Ascending aorta (tissue), 2 donors: ENCODE measurements at regions of chr17 and their contacts with region 1.

Region 1: DNA sequence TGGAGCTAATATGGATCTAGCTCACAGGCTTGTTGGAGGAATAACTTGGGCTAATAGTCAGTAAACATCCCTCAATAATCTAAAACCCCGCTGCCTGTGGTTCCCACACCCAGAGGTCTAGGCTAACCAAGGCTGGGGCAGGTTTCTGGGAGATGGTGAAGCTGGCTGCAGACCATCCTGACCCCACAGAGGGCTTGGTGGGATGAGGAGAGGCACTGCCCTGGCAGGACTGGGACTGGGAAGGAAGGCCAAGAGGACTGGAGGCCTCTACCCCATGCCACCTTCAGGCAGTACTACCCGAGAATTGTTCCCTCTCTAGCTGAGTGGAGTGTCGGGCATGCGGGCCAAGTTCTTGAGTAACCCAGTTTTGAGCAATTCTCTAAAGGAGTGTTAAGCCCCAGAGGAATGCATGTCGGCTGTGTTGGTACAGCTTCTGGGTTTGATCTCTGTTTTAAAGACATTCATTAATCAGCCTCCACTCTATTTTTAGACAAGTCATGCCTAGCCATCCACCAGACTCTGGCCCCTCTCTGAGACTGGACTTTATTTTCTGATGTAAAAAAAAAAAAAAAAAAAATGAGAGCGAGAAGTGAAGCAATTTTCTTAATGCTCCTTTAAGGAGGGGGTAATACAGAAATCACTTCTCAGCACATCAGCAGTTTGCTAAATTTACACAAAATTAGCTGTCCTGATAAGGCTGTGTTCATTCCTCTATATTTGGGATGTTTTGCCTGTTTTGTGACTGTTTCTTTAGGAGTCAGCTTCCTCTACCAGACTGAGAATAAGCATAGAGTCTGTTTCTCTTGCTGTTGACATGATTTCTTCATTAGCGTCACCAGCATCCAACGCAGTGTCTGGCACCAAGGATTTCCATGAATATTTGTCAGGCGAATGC is 88.8 kb downstream of the AXIN2 start:
- DNase-seq: peak; percentile 41 to 94
- H3K4me3 ChIP-seq: peak overlapping the region; percentile 7 to 41
- H3K27ac ChIP-seq: peak overlapping the region; percentile 86 to 95
- H3K4me1 ChIP-seq: peaks cover 0 to 19% of the 10 kb centered on the region in 2 donors
- H3K27me3 ChIP-seq: no peaks in the 10 kb centered on the region
- CTCF ChIP-seq: no peak

Region 2: GRCh38 chr17:65055348-65056261 is 417.1 kb before region 1 on chr17:
- intact Hi-C with region 1: loop called (anchors 5 kb)
- DNase-seq: peak; percentile 27 to 80
- H3K4me3 ChIP-seq: peak overlapping the region; percentile 87 to 92
- H3K27ac ChIP-seq: peak overlapping the region; percentile 97 to 98
- H3K4me1 ChIP-seq: peaks cover 0 to 30% of the 10 kb centered on the region in 2 donors
- H3K27me3 ChIP-seq: no peaks in the 10 kb centered on the region
- CTCF ChIP-seq: no peak

Region 3: GRCh38 chr17:65270499-65271253 is 202.0 kb before region 1 on chr17:
- intact Hi-C with region 1: loop called (anchors 5 kb)
- DNase-seq: no peak
- H3K4me3 ChIP-seq: no peak overlapping the region
- H3K27ac ChIP-seq: peak overlapping the region; percentile 85 to 91
- H3K4me1 ChIP-seq: peaks cover 0 to 19% of the 10 kb centered on the region in 2 donors
- H3K27me3 ChIP-seq: no peaks in the 10 kb centered on the region
- CTCF ChIP-seq: no peak

Region 4: GRCh38 chr17:65389953-65390352 is 82.7 kb before region 1 on chr17:
- intact Hi-C with region 1: no loop called
- DNase-seq: no peak
- H3K4me3 ChIP-seq: no peak overlapping the region
- H3K27ac ChIP-seq: no peak overlapping the region
- H3K4me1 ChIP-seq: no peaks in the 10 kb centered on the region
- H3K27me3 ChIP-seq: no peaks in the 10 kb centered on the region
- CTCF ChIP-seq: no peak

Region 5: DNA sequence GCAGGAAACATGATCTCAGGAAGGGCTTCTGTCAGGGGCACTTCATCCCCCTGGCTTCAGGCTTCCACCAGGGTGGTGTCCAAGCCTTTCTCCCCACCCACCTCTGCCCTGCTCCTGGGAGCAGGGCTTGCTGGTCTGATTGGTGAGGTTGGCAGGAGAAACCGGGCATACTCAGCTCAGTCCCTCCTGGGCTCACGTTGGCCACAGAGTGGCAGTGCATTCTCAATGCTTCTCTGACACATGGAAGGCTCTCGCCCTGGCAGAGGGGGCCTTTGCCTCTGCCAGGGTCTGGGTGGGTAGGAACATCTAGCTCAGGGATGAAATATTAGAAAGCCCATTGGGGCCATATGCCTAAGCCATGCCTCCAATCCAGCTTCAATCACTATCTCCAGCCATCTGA is 54.0 kb before region 1 on chr17:
- intact Hi-C with region 1: loop called (anchors 5 kb)
- DNase-seq: no peak
- H3K4me3 ChIP-seq: no peak overlapping the region
- H3K27ac ChIP-seq: no peak overlapping the region
- H3K4me1 ChIP-seq: peaks cover 0 to 8% of the 10 kb centered on the region in 2 donors
- H3K27me3 ChIP-seq: no peaks in the 10 kb centered on the region
- CTCF ChIP-seq: peak in 1 of 3 experiments; percentile 19

Region 6: GRCh38 chr17:65430209-65430833 is 42.3 kb before region 1 on chr17:
- intact Hi-C with region 1: no loop called
- DNase-seq: no peak
- H3K4me3 ChIP-seq: no peak overlapping the region
- H3K27ac ChIP-seq: no peak overlapping the region
- H3K4me1 ChIP-seq: no peaks in the 10 kb centered on the region
- H3K27me3 ChIP-seq: no peaks in the 10 kb centered on the region
- CTCF ChIP-seq: no peak

Region 7: DNA sequence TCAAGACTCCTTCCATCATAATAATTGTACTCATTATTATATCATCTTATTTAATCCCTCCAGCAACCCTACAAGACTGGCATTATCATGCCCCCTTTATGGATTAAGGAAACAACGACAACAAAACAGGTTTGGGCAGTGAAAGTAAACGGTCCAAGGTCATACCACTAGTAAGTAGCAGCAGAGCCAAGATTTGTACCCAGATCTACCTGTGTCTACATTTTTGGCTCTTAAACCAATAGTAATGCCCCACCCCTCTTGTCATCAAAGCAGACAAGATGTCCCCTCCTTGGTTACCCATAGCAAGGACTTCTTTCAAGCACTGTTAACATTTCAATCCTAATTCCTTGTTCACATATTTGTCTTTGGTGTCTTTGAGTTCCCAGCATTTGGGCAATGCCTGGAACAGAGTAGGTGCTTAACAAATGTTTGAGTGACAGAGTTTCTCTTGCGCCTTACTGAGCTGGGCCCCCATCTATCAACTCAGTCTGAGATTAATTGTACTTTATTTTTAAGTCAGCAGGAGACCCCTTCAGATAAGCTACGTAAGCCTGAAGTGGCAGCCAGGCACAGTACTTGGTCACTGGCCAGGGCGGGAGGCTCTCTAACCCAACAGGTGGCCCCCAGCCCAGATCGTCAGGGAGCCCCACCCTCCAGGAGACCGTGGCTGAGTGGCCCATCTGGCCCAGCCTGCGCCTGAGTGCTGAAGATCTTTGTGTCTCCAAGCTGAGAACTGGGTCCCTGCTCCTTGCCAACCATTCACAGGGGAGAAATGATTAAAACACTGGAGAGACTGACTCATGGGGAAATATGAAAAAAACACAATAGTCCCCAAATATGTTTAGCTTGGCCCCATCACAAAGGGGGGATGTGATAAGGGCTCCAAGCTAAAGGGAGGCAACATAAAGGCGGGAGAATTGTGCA is 13.0 kb after region 1 on chr17:
- intact Hi-C with region 1: loop called (anchors 1 kb)
- DNase-seq: peak; percentile 69 to 93
- H3K4me3 ChIP-seq: no peak overlapping the region
- H3K27ac ChIP-seq: peak overlapping the region; percentile 87 to 91
- H3K4me1 ChIP-seq: peaks cover 4 to 12% of the 10 kb centered on the region in 2 donors
- H3K27me3 ChIP-seq: no peaks in the 10 kb centered on the region
- CTCF ChIP-seq: no peak

Region 8: GRCh38 chr17:65785109-65785508 is 312.4 kb after region 1 on chr17:
- intact Hi-C with region 1: loop called (anchors 5 kb)
- DNase-seq: no peak
- H3K4me3 ChIP-seq: no peak overlapping the region
- H3K27ac ChIP-seq: peak overlapping the region; percentile 52 to 61
- H3K4me1 ChIP-seq: peaks cover 6 to 15% of the 10 kb centered on the region in 2 donors
- H3K27me3 ChIP-seq: no peaks in the 10 kb centered on the region
- CTCF ChIP-seq: no peak